Sciatic nerve (tissue), 2 donors: ENCODE measurements at regions of chr11 and their contacts with region 1.

Region 1: GRCh38 chr11:19405966-19406365 is 165.2 kb upstream of the E2F8 start:
- DNase-seq: no peak
- ATAC-seq: no peak

Region 2: GRCh38 chr11:19259487-19260345 is 146.2 kb before region 1 on chr11:
- intact Hi-C with region 1: no loop called
- DNase-seq: peak; percentile 82
- ATAC-seq: peak; percentile 78

Region 3: DNA sequence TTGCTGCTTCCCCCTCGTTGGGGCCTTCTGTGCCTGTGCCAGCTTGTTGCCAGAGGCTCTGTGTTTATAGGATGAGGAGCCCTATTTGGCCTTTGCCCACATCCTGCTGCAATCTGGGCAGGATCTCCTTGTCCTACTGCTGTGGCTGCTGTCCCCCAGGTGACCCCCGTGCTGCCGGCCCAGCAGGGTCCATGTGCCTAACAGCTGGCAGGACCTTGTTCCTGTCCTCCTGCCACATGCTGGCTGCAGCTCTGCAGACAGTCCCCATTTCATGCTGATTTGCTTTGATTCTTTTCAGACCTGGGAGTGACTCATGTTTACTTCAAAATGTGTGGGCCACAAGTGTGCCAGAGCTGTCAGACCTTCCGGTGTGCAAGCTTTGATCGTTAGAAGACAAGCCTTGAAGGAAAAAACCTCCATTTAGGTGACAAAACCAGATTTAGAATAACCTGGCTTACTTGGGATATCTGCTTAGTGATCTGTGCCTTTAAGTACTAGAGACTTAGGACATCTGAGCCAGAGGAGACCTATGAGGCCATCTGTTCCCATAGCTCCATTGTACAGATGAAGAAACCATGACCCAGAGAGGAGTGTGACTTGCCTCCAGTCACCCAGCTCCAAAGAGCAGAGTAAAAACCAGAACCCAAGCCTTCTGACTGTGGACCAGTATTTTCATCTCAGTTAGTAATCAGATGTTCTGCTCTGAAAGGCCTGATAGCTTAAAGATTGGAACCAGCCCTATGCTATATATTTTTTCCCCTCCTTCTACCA is 317.8 kb after region 1 on chr11:
- intact Hi-C with region 1: loop called (anchors 2 kb)
- DNase-seq: no peak
- ATAC-seq: no peak